CD4-positive, alpha-beta memory T cell (primary cell): ENCODE measurements at regions of chr15 and their contacts with region 1.

Region 1: GRCh38 chr15:65638681-65639089 is 16.9 kb downstream of the SLC24A1 start:
- DNase-seq: peak; percentile 56 to 73 (median 70)
- H3K4me3 ChIP-seq: no peak overlapping the region
- H3K4me3 Mint-ChIP-seq: peak overlapping the region in 4 of 8 donors; percentile 2 to 32 (median 6)
- H3K27ac ChIP-seq: no peak overlapping the region
- H3K27ac Mint-ChIP-seq: peak overlapping the region in 3 of 7 donors; percentile 0 to 38 (median 1)
- H3K4me1 ChIP-seq: peaks cover 8% of the 10 kb centered on the region
- H3K4me1 Mint-ChIP-seq: peaks cover 8 to 16% (median 9%) of the 10 kb centered on the region in 4 donors
- H3K27me3 ChIP-seq: no peaks in the 10 kb centered on the region
- H3K27me3 Mint-ChIP-seq: no peaks in the 10 kb centered on the region

Region 2: GRCh38 chr15:65653341-65653740 is 14.7 kb after region 1 on chr15:
- CTCF ChIA-PET with region 1: interaction called, 12 read pairs
- POLR2A ChIA-PET with region 1: no interaction called
- intact Hi-C with region 1: no loop called
- DNase-seq: no peak
- H3K4me3 ChIP-seq: no peak overlapping the region
- H3K4me3 Mint-ChIP-seq: no peak overlapping the region
- H3K27ac ChIP-seq: no peak overlapping the region
- H3K27ac Mint-ChIP-seq: peak overlapping the region in 2 of 7 donors; percentile 41 to 80
- H3K4me1 ChIP-seq: no peaks in the 10 kb centered on the region
- H3K4me1 Mint-ChIP-seq: peaks cover 4 to 14% (median 10%) of the 10 kb centered on the region in 4 donors
- H3K27me3 ChIP-seq: no peaks in the 10 kb centered on the region
- H3K27me3 Mint-ChIP-seq: no peaks in the 10 kb centered on the region

Region 3: GRCh38 chr15:65666257-65666656 is 27.6 kb after region 1 on chr15:
- CTCF ChIA-PET with region 1: no interaction called
- POLR2A ChIA-PET with region 1: no interaction called
- intact Hi-C with region 1: no loop called
- DNase-seq: no peak
- H3K4me3 ChIP-seq: no peak overlapping the region
- H3K4me3 Mint-ChIP-seq: no peak overlapping the region
- H3K27ac ChIP-seq: no peak overlapping the region
- H3K27ac Mint-ChIP-seq: peak overlapping the region in 1 of 7 donors; percentile 57
- H3K4me1 ChIP-seq: no peaks in the 10 kb centered on the region
- H3K4me1 Mint-ChIP-seq: no peaks in the 10 kb centered on the region
- H3K27me3 ChIP-seq: no peaks in the 10 kb centered on the region
- H3K27me3 Mint-ChIP-seq: no peaks in the 10 kb centered on the region

Region 4: GRCh38 chr15:65856821-65857455 is 218.3 kb after region 1 on chr15:
- CTCF ChIA-PET with region 1: interaction called, 69 read pairs
- POLR2A ChIA-PET with region 1: no interaction called
- intact Hi-C with region 1: loop called (anchors 1 kb)
- DNase-seq: peak; percentile 76 to 84 (median 77)
- H3K4me3 ChIP-seq: no peak overlapping the region
- H3K4me3 Mint-ChIP-seq: peak overlapping the region in 1 of 8 donors; percentile 32
- H3K27ac ChIP-seq: no peak overlapping the region
- H3K27ac Mint-ChIP-seq: peak overlapping the region in 4 of 7 donors; percentile 10 to 88 (median 49)
- H3K4me1 ChIP-seq: no peaks in the 10 kb centered on the region
- H3K4me1 Mint-ChIP-seq: peaks cover 9 to 13% (median 10%) of the 10 kb centered on the region in 4 donors
- H3K27me3 ChIP-seq: no peaks in the 10 kb centered on the region
- H3K27me3 Mint-ChIP-seq: no peaks in the 10 kb centered on the region

Region 5: DNA sequence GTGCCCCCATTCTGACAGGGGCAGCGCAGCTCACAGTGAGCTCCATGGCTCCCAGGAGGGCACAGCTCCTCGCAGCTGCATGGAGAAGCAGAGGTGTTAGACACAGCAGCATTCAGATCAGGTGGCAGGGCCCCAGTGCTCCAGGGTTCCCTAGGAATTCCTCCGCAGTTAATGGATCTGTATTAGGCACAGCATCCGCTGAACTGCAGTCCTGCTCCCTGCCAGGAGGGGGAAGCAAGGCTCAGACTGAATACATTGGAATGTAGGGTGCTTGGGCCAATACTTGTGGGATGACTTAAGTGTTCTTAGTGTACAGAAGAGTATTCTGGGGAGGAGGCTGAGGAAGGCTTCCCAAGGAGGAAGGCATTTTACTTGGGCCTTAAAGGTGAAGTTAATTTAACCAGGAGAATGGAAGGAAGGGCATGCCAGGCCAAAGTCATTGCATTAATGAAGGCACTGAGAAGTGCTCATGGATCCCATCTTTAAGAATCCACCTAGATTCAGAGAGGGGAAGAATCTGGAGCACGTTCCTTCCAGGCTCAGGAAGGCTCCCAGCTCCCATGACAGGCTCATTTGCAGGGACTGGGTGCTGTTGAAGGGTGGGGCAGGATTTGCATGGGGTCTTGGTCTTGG is 342.3 kb after region 1 on chr15:
- CTCF ChIA-PET with region 1: no interaction called
- POLR2A ChIA-PET with region 1: no interaction called
- intact Hi-C with region 1: loop called (anchors 1 kb)
- DNase-seq: no peak
- H3K4me3 ChIP-seq: no peak overlapping the region
- H3K4me3 Mint-ChIP-seq: peak overlapping the region in 4 of 8 donors; percentile 18 to 27 (median 25)
- H3K27ac ChIP-seq: no peak overlapping the region
- H3K27ac Mint-ChIP-seq: no peak overlapping the region
- H3K4me1 ChIP-seq: peaks cover 6% of the 10 kb centered on the region
- H3K4me1 Mint-ChIP-seq: peaks cover 6 to 18% (median 9%) of the 10 kb centered on the region in 4 donors
- H3K27me3 ChIP-seq: peaks cover 6% of the 10 kb centered on the region
- H3K27me3 Mint-ChIP-seq: peaks cover 23 to 29% of the 10 kb centered on the region in 2 donors

Region 6: GRCh38 chr15:66287461-66288057 is 648.9 kb after region 1 on chr15:
- CTCF ChIA-PET with region 1: interaction called, 3 read pairs
- POLR2A ChIA-PET with region 1: no interaction called
- intact Hi-C with region 1: loop called (anchors 2 kb)
- DNase-seq: peak in 4 of 5 donors; percentile 25 to 32 (median 29)
- H3K4me3 ChIP-seq: no peak overlapping the region
- H3K4me3 Mint-ChIP-seq: no peak overlapping the region
- H3K27ac ChIP-seq: no peak overlapping the region
- H3K27ac Mint-ChIP-seq: peak overlapping the region in 3 of 7 donors; percentile 22 to 68 (median 26)
- H3K4me1 ChIP-seq: peaks cover 24% of the 10 kb centered on the region
- H3K4me1 Mint-ChIP-seq: peaks cover 17 to 26% (median 22%) of the 10 kb centered on the region in 4 donors
- H3K27me3 ChIP-seq: no peaks in the 10 kb centered on the region
- H3K27me3 Mint-ChIP-seq: no peaks in the 10 kb centered on the region